ENCODE measurements at regions of chr20 and their contacts with region 1.

Region 1: DNA sequence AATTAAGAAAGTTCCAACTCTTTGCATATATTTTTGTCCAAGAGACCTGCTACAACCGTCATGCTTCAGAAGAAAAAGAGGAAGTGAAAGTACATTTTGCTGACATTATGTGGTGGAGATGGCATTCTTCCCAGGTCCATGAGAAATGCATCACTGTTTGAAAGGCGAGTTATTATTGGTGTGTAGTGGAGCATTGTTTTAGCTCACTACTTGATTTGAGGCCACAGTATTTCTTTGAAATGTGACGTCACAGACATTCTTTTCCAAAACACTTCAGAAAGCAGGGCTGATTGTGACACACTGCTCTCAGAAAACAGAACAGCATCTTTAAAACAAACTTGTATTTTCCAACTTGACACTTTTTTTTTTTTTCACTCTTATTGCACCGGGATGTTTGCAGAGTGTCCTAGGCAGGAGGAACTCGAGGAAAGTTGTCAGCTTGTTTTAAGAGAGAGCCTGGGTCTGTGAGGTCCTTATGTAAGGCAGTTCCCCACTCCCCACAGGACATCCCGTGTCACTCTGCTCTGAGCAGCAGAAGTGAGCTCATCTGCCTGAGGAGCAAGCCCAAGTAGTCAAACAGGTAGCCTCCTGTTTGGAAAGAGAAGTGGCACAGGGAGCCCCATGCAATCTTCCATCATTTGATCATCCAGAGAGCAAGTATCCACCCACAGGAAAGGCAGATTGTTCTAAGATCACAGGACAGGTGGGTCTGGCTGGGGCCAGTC is 1.1 kb downstream of the SPTLC3 start:
- DNase-seq: peak; percentile 86
- H3K4me3 Mint-ChIP-seq: peak overlapping the region; percentile 81
- H3K27ac Mint-ChIP-seq: peak overlapping the region; percentile 92
- H3K4me1 Mint-ChIP-seq: peaks cover 55% of the 10 kb centered on the region
- H3K27me3 Mint-ChIP-seq: no peaks in the 10 kb centered on the region
- CTCF ChIP-seq: no peak

Region 2: GRCh38 chr20:12984069-12984765 is 25.6 kb before region 1 on chr20:
- CTCF ChIA-PET with region 1: interaction called, 11 read pairs
- POLR2A ChIA-PET with region 1: interaction called, 44 read pairs
- intact Hi-C with region 1: no loop called
- DNase-seq: peak; percentile 23
- H3K4me3 Mint-ChIP-seq: no peak overlapping the region
- H3K27ac Mint-ChIP-seq: no peak overlapping the region
- H3K4me1 Mint-ChIP-seq: peaks cover 15% of the 10 kb centered on the region
- H3K27me3 Mint-ChIP-seq: no peaks in the 10 kb centered on the region
- CTCF ChIP-seq: no peak

Region 3: GRCh38 chr20:13029687-13030510 is 20.1 kb after region 1 on chr20:
- CTCF ChIA-PET with region 1: interaction called, 48 read pairs
- POLR2A ChIA-PET with region 1: interaction called, 257 read pairs
- intact Hi-C with region 1: loop called (anchors 1 kb)
- DNase-seq: peak; percentile 97
- H3K4me3 Mint-ChIP-seq: peak overlapping the region; percentile 57
- H3K27ac Mint-ChIP-seq: peak overlapping the region; percentile 97
- H3K4me1 Mint-ChIP-seq: peaks cover 69% of the 10 kb centered on the region
- H3K27me3 Mint-ChIP-seq: no peaks in the 10 kb centered on the region
- CTCF ChIP-seq: no peak

Region 4: GRCh38 chr20:13068349-13068748 is 58.5 kb after region 1 on chr20:
- CTCF ChIA-PET with region 1: interaction called, 9 read pairs
- POLR2A ChIA-PET with region 1: interaction called, 24 read pairs
- intact Hi-C with region 1: no loop called
- DNase-seq: no peak
- H3K4me3 Mint-ChIP-seq: no peak overlapping the region
- H3K27ac Mint-ChIP-seq: no peak overlapping the region
- H3K4me1 Mint-ChIP-seq: peaks cover 9% of the 10 kb centered on the region
- H3K27me3 Mint-ChIP-seq: no peaks in the 10 kb centered on the region
- CTCF ChIP-seq: no peak

Region 5: DNA sequence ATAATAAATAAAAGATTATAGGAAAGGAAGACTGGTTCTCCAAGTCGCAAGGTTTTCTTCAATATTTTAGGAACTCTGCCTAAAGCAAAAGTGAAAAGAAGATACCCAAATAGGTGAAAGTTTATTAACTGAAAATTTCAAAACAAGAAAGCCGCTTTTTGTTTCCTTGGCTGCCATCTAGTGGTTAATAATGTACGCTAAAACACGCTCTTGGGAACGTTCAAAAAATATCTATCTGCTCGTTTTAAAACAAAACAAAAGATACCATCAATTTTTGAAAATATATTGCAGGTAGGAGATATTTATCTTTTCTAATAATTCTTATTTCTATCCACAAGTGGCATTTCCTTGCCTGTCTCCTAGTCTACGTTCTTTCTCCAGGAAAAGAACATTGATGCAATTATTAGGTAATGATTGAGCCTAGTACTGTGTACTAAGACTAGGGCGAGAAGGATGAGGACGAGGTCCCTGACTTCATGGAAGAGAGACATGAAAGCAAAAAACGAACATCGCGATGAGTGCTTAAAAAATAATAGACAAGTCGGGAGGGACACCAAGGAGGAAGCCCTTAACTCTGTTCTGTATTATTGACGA is 96.1 kb after region 1 on chr20:
- CTCF ChIA-PET with region 1: interaction called, 32 read pairs
- POLR2A ChIA-PET with region 1: interaction called, 10 read pairs
- intact Hi-C with region 1: loop called (anchors 1 kb)
- DNase-seq: peak; percentile 51
- H3K4me3 Mint-ChIP-seq: no peak overlapping the region
- H3K27ac Mint-ChIP-seq: no peak overlapping the region
- H3K4me1 Mint-ChIP-seq: peaks cover 11% of the 10 kb centered on the region
- H3K27me3 Mint-ChIP-seq: no peaks in the 10 kb centered on the region
- CTCF ChIP-seq: peak; percentile 66